PC-9 (cell line): ENCODE measurements at regions of chr19 and their contacts with region 1.

Region 1: DNA sequence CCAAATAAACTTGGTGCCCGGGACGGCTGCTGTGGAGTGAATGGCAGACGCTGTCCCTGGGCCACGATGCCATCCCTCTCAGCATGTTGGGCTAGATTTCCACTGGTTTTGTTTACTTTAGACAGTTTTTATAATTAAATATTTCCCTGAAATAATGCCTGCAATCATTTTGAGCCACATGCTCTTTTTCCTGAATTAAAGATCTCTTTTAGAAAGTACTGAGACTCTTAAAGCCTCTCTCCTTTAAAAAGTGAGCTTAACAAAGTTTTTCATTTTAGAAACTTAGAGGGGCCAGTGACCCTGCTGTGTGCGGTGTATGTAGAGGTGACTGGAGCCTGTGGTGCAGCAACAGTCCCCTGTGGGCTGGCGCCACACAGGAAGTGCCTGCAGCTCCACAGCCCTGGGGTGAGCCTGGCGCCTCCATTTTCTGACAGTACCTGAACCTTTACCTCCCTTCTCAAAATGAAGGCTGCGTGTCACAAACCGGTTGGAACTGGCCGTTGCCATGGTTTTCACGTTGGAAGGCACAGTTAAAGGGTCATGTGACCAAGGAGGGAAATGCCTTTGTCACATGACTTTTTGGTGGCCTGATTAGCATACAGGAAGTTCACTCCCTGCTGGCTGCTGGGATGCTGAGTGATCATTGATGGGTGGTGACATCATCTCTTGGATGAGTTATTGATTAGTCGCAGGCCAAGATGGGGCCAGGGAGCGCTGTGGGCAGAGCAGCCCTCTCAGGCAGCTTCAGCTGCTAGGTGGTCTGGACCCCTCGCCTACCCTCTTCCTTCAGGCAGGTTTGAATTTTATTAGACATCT is 26.3 kb downstream of the TSSK6 start:
- DNase-seq: peak; percentile 34 to 76
- H3K4me3 ChIP-seq: no peak overlapping the region
- H3K27ac ChIP-seq: peak overlapping the region; percentile 70
- H3K4me1 ChIP-seq: peaks cover 23% of the 10 kb centered on the region
- H3K27me3 ChIP-seq: no peaks in the 10 kb centered on the region
- CTCF ChIP-seq: no peak

Region 2: GRCh38 chr19:19145684-19146608 is 343.1 kb before region 1 on chr19:
- CTCF ChIA-PET with region 1: interaction called, 23 read pairs
- POLR2A ChIA-PET with region 1: no interaction called
- intact Hi-C with region 1: loop called (anchors 1 kb)
- DNase-seq: peak; percentile 48 to 79
- H3K4me3 ChIP-seq: no peak overlapping the region
- H3K27ac ChIP-seq: no peak overlapping the region
- H3K4me1 ChIP-seq: no peaks in the 10 kb centered on the region
- H3K27me3 ChIP-seq: no peaks in the 10 kb centered on the region
- CTCF ChIP-seq: peak; percentile 99

Region 3: DNA sequence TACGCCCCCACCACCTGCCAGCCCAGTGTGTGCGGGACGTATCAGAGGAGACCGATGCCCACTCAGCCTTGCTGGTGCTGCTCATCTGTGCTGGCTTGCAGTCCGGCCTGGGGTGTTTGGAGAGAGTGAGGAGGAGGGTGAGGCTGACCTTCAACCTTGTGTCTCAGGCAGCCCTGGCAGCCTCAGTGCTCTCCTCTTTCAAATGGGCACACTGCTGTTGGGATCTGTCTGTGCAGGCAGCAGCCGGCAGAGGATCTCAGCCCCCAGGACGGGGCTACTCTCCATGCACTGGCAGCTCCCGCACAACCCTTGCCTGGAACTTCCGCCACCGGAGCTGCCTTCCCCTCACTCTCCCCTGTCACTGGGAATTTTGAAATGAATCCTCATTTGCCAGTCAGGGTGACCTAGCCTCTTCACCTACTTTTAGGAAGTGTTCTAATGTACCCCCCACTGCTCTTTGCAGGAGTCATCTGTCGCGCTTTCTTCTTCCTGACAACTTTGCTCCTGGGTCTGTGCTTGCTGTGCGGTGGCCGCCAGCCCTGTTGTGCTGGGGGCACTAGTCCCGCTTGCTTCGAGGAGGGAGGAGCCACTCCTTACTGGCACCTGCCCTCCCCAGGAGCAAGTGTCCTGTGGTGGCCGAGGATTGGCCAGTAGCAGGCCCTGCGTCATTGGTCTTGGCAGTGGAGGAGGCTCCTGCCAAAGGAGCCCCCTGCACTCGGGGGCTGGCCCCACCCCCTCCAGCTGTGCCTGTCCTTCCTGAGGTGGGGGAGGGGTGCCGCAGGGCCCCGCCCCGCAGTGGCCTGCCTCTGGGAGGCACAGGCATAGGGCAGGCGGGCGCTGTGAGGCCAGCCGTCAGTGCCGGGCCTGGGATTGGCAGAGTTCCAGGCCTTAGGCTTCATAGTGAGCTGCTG is 27.2 kb before region 1 on chr19:
- CTCF ChIA-PET with region 1: interaction called, 17 read pairs
- POLR2A ChIA-PET with region 1: no interaction called
- intact Hi-C with region 1: no loop called
- DNase-seq: no peak
- H3K4me3 ChIP-seq: no peak overlapping the region
- H3K27ac ChIP-seq: no peak overlapping the region
- H3K4me1 ChIP-seq: no peaks in the 10 kb centered on the region
- H3K27me3 ChIP-seq: no peaks in the 10 kb centered on the region
- CTCF ChIP-seq: no peak